ENCODE measurements at regions of chr17 and their contacts with region 1.

Region 1: DNA sequence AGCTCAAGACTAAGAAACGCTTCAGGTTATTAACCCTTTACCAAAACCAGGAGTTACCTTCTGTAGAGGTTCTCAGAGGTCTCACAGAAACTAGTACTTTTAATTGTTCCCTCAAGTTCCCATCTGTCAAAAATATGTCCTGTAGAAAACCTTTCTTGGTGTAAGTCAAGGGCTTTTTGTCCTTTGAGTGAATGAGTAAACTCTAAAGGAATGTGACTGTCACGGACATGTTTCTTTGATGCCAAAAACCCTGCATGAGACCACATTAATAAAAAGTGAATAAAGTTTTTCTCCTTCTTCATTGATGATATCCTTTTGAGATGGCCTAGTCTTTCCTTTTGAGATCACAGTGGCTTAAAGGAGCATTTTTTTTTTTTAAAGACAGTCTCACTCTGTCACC is 102.9 kb downstream of the NLK start:
- DNase-seq: no peak
- ATAC-seq: no peak
- H3K4me3 ChIP-seq: no peak overlapping the region
- H3K27ac ChIP-seq: no peak overlapping the region
- H3K4me1 ChIP-seq: peaks cover 0 to 14% (median 0%) of the 10 kb centered on the region in 12 donors
- H3K27me3 ChIP-seq: no peaks in the 10 kb centered on the region
- CTCF ChIP-seq: no peak
- POLR2A ChIP-seq: no peak

Region 2: GRCh38 chr17:27805520-27806146 is 339.7 kb before region 1 on chr17:
- intact Hi-C with region 1: loop called in 1 of 10 experiments (anchors 10 kb)
- DNase-seq: peak; percentile 80 to 86 (median 82)
- ATAC-seq: peak; percentile 86 to 94 (median 91)
- H3K4me3 ChIP-seq: peak overlapping the region in 10 of 12 donors; percentile 16 to 51 (median 40)
- H3K27ac ChIP-seq: peak overlapping the region in 3 of 12 donors; percentile 41 to 53 (median 49)
- H3K4me1 ChIP-seq: peaks cover 0 to 31% (median 5%) of the 10 kb centered on the region in 12 donors
- H3K27me3 ChIP-seq: no peaks in the 10 kb centered on the region
- CTCF ChIP-seq: peak; percentile 70 to 89 (median 82)
- POLR2A ChIP-seq: no peak

Region 3: GRCh38 chr17:27892866-27893769 is 252.2 kb before region 1 on chr17 and contains the start of gene LYRM9:
- intact Hi-C with region 1: loop called in 1 of 10 experiments (anchors 10 kb)
- DNase-seq: peak; percentile 92 to 98 (median 93)
- ATAC-seq: peak; percentile 92 to 100 (median 100)
- H3K4me3 ChIP-seq: peak within 1 kb of the TSS; percentile 47 to 92 (median 76)
- H3K27ac ChIP-seq: peak within 1 kb of the TSS; percentile 14 to 93 (median 88)
- H3K4me1 ChIP-seq: peaks cover 0 to 27% (median 10%) of the 10 kb centered on the region in 12 donors
- H3K27me3 ChIP-seq: no peaks in the 10 kb centered on the region
- CTCF ChIP-seq: peak; percentile 80 to 99 (median 96)
- POLR2A ChIP-seq: peak in 1 of 2 donors; percentile 50
- total RNA-seq, gene LYRM9: 3.9 to 25.2 (median 9.7) TPM

Region 4: DNA sequence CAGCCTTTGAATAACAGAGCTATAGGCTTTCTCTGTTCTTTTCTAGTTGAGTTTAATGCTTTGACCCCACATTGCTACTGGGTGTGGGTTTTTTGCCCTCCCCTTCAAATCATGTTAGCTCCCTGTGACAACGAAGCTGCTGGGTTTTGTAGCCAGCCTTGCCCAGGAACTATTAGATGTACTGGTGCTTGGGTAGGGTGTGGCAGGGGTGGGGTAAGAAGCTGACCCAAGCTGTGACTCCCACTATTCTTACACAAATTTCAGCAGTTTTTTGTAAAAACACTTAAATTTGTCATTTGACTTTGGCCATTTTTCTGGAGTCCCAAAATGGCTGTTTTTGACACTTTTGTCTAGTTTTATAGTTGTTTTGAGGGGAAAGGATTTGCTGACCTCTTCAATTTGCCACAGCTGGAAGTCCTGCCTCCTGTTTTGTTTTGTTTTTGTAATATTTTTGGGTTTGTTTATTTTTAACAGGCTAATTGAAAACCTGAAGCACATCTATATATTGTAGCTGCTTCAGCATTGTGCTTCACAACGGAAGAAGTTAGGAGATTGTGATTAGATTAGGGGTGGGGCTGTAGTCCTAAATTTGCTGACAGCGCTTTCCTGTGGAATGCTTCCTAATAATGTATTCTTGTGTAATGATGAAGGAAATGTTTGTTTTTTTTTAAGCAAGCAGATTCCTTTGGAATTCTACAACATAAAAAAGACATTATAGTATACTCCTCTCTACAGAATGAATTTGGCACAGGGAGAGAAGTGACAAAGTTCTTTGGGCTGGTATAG is 32.9 kb before region 1 on chr17:
- intact Hi-C with region 1: loop called in 1 of 10 experiments (anchors 2 kb)
- DNase-seq: no peak
- ATAC-seq: peak; percentile 26 to 88 (median 54)
- H3K4me3 ChIP-seq: no peak overlapping the region
- H3K27ac ChIP-seq: peak overlapping the region; percentile 4 to 62 (median 36)
- H3K4me1 ChIP-seq: peaks cover 0 to 40% (median 19%) of the 10 kb centered on the region in 12 donors
- H3K27me3 ChIP-seq: no peaks in the 10 kb centered on the region
- CTCF ChIP-seq: no peak
- POLR2A ChIP-seq: no peak